ENCODE measurements at regions of chr15 and their contacts with region 1.

Region 1: DNA sequence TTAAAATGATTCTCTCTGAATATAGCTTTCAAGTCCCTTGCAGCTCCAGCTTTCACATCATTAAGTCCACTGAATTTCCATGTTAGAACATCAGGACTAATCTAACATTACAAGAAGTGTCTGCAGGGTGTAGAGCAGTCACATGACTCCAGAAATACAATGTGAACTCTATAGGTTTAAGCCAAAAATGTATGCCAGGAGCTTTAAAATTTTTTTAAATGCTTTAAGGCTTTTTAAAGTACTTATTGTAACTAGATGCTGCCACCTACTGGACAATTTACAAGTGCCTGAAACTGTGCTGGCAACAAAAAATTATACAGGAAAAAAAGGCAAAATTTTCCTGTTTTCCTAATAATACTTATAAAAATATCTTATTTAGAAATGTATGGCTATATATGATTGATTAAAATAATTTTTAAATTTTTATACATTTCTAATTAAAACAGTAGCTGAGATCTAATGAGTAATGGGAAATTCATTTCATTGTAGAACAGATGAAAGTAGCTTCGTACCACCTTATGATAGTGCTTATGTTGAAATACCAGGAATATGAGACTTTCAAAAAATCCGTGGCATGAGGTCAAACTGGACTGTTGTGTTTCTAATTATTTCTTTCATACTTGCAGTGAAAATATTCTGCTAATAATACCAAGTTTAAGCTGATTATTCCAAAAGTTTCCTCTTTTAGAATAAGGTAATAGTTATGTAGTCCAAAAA is 25.7 kb downstream of the FSIP1 start:
- DNase-seq: no peak
- ATAC-seq: no peak
- H3K4me3 ChIP-seq: no peak overlapping the region
- H3K27ac ChIP-seq: no peak overlapping the region
- H3K4me1 ChIP-seq: no peaks in the 10 kb centered on the region
- H3K27me3 ChIP-seq: no peaks in the 10 kb centered on the region

Region 2: GRCh38 chr15:38217191-38217595 is 1539.8 kb before region 1 on chr15:
- intact Hi-C with region 1: no loop called
- DNase-seq: no peak
- ATAC-seq: no peak
- H3K4me3 ChIP-seq: no peak overlapping the region
- H3K27ac ChIP-seq: no peak overlapping the region
- H3K4me1 ChIP-seq: no peaks in the 10 kb centered on the region
- H3K27me3 ChIP-seq: no peaks in the 10 kb centered on the region

Region 3: GRCh38 chr15:38817427-38818156 is 939.4 kb before region 1 on chr15:
- intact Hi-C with region 1: loop called (anchors 10 kb)
- DNase-seq: peak; percentile 76 to 93
- ATAC-seq: peak; percentile 91
- H3K4me3 ChIP-seq: no peak overlapping the region
- H3K27ac ChIP-seq: no peak overlapping the region
- H3K4me1 ChIP-seq: no peaks in the 10 kb centered on the region
- H3K27me3 ChIP-seq: no peaks in the 10 kb centered on the region

Region 4: DNA sequence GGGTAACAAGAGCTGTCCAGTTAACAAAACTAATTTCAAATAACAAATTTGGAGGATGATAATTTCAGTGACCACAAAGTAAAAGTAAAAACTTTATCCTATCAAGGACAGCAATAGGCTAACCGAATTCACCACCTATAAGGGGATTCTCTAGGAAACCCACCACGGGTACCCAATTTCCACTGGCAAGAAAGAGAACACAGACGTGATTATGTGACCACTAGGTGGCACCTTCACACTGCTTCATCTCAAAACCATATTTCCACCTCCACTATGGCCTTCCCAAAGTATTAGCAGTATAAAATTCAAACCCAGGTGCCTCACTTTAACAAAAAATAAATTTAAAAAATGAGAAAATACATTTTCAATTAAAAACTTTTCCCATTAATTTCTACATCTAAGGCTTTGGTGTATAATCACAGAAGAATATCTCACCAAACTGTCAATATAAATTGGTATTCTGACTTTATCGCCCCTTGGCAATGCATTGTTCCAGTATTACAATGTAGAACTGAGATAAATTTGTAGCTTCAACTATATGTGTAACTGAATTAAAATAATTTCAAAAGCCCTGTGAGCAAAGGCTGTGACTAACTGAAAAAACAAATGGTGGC is 70.9 kb before region 1 on chr15:
- intact Hi-C with region 1: loop called (anchors 2 kb)
- DNase-seq: no peak
- ATAC-seq: no peak
- H3K4me3 ChIP-seq: no peak overlapping the region
- H3K27ac ChIP-seq: no peak overlapping the region
- H3K4me1 ChIP-seq: no peaks in the 10 kb centered on the region
- H3K27me3 ChIP-seq: no peaks in the 10 kb centered on the region